Activated CD4-positive, alpha-beta T cell treated with anti-CD3 and anti-CD28 coated beads for 36 hours (primary cell): ENCODE measurements at regions of chr2 and their contacts with region 1.

Region 1: GRCh38 chr2:188524519-188525113 is 232.9 kb downstream of the GULP1 start:
- DNase-seq: peak; percentile 28
- ATAC-seq: no peak
- H3K4me3 Mint-ChIP-seq: no peak overlapping the region
- H3K27ac Mint-ChIP-seq: no peak overlapping the region
- H3K4me1 Mint-ChIP-seq: no peaks in the 10 kb centered on the region
- H3K27me3 Mint-ChIP-seq: peaks cover 3% of the 10 kb centered on the region

Region 2: DNA sequence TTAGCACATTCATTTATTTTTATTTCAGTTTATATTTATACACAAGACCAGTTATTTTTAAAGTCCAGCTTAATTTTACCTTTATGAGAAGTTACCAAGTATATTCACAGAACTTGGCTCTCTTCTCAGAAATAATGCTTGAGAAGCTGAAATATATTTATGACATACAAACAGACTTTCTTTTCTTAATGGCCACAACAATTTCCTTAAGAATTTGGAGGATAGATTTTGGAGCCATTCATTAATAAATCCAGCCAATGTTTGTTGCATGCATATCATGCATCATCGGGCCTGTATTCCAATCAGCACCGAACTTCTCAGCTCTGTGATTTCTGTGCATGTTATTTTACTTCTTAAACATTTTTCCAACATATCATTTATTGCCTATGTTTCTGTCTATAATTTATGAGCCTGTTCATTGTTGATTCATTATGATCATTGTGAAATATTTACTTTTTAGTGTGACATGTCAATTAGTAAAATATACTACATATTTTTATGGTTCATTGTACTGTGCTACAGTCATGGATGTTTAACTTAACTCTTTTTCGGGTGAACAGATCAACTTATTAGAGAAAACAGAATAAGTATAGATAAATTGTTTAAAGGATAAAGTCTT is 229.4 kb before region 1 on chr2:
- CTCF ChIA-PET with region 1: no interaction called
- POLR2A ChIA-PET with region 1: no interaction called
- intact Hi-C with region 1: no loop called
- DNase-seq: no peak
- ATAC-seq: no peak
- H3K4me3 Mint-ChIP-seq: no peak overlapping the region
- H3K27ac Mint-ChIP-seq: no peak overlapping the region
- H3K4me1 Mint-ChIP-seq: peaks cover 6% of the 10 kb centered on the region
- H3K27me3 Mint-ChIP-seq: peaks cover 33% of the 10 kb centered on the region

Region 3: DNA sequence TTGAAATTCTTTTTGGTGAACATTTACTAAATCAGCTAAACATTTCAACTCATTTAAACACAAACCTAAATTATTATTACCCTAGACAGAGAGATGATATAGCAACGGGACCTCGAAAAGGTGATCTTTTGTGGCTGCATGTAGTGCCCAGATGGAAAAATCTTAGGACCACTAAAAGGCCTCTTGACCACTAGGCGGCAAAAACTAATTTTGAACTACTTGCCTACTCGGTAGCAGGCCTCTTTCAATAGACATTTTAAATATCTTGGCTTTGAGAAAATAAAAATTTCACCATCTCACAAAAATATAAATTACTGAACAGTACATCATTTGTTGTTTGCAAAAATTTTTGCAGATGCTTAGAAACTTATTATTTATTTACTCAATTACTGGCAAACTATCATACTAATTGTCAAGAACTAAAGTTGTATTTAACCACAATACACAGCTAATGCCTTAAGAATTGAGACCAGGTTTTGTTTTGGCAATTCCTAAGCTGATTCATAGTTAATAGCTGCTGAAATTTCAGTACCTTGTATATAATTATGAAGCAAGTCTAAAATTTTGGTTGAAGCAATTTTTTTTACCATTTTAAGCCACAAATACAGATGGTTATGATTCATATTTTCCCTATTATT is 458.9 kb after region 1 on chr2:
- CTCF ChIA-PET with region 1: interaction called, 4 read pairs
- POLR2A ChIA-PET with region 1: no interaction called
- intact Hi-C with region 1: loop called (anchors 1 to 10 kb)
- DNase-seq: no peak
- ATAC-seq: no peak
- H3K4me3 Mint-ChIP-seq: no peak overlapping the region
- H3K27ac Mint-ChIP-seq: no peak overlapping the region
- H3K4me1 Mint-ChIP-seq: peaks cover 10% of the 10 kb centered on the region
- H3K27me3 Mint-ChIP-seq: no peaks in the 10 kb centered on the region

Region 4: GRCh38 chr2:189096769-189097447 is 572.3 kb after region 1 on chr2:
- CTCF ChIA-PET with region 1: interaction called, 11 read pairs
- POLR2A ChIA-PET with region 1: no interaction called
- intact Hi-C with region 1: loop called (anchors 2 to 10 kb)
- DNase-seq: no peak
- ATAC-seq: no peak
- H3K4me3 Mint-ChIP-seq: no peak overlapping the region
- H3K27ac Mint-ChIP-seq: no peak overlapping the region
- H3K4me1 Mint-ChIP-seq: no peaks in the 10 kb centered on the region
- H3K27me3 Mint-ChIP-seq: peaks cover 2% of the 10 kb centered on the region

Region 5: DNA sequence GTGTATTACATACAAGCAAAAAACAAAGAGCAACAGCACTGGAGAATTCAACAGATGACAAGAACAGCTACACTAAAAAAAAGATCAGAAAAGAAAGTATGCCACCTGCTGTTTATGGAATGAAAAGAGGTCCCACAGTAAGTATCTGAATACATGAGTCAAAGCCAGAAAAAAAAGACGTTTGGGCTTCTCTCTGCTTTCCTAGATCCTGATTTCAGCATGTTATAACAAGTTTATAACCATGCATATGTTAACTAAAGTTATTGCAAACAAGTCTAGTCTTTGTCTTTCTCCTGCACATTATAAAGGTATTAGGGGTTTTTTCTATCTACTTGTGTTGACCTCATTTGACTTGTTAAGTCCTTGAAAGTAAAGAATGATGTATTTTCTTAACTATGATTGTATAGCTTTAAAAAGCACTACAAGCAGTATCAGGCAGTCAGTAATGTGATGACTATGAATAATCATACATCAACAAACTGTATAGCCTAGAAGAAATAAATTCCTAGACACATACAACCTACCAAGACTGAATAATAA is 763.4 kb after region 1 on chr2:
- CTCF ChIA-PET with region 1: no interaction called
- POLR2A ChIA-PET with region 1: no interaction called
- intact Hi-C with region 1: loop called in 1 of 2 experiments (anchors 2 kb)
- DNase-seq: no peak
- ATAC-seq: peak; percentile 85
- H3K4me3 Mint-ChIP-seq: no peak overlapping the region
- H3K27ac Mint-ChIP-seq: peak overlapping the region; percentile 23
- H3K4me1 Mint-ChIP-seq: peaks cover 48% of the 10 kb centered on the region
- H3K27me3 Mint-ChIP-seq: no peaks in the 10 kb centered on the region